Heart right ventricle (tissue), 16 donors: ENCODE measurements at regions of chr2 and their contacts with region 1.

Region 1: DNA sequence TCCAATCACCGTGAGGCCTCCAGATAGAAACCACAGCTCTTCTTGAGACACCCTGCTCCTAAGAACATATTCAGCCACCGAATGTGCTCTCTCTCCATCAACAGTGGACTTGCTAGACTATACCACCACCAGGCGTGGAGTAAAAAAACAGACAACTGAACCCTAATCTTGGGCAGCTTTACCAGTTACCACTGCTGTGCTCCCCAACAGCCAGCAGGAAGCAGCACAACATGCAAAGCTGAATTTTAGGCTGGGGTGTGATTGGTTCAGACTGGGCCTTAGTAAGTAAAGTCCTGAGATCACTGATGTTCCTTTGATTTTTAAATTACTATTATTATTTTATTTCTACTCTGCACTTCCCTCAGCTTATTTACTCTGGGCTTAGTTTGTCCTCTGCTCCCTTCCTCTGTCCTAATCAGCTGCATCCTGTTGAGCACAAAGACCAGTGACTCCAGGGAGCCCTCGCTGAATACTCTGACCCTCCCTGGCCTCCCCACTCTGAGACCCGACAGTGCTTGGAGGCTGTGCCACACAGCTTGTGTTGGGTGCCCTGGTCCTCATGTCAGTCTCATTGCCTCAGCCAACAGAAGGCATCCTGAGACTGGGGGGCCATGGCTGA is 21.9 kb downstream of the MRPL35 start:
- DNase-seq: peak in 1 of 2 donors; percentile 61
- ATAC-seq: peak in 1 of 8 donors; percentile 15
- H3K4me3 ChIP-seq: no peak overlapping the region
- H3K27ac ChIP-seq: peak overlapping the region in 5 of 10 donors; percentile 46 to 94 (median 90)
- H3K4me1 ChIP-seq: peaks cover 17 to 68% (median 50%) of the 10 kb centered on the region in 9 donors
- H3K27me3 ChIP-seq: no peaks in the 10 kb centered on the region
- CTCF ChIP-seq: peak; percentile 66 to 97 (median 90)

Region 2: GRCh38 chr2:86160156-86160952 is 60.8 kb before region 1 on chr2:
- intact Hi-C with region 1: no loop called
- DNase-seq: no peak
- ATAC-seq: no peak
- H3K4me3 ChIP-seq: no peak overlapping the region
- H3K27ac ChIP-seq: no peak overlapping the region
- H3K4me1 ChIP-seq: no peaks in the 10 kb centered on the region
- H3K27me3 ChIP-seq: no peaks in the 10 kb centered on the region
- CTCF ChIP-seq: no peak

Region 3: GRCh38 chr2:86274918-86275275 is 53.7 kb after region 1 on chr2:
- intact Hi-C with region 1: loop called in 3 of 10 experiments (anchors 10 kb)
- DNase-seq: peak; percentile 51 to 72
- ATAC-seq: peak; percentile 63 to 87 (median 80)
- H3K4me3 ChIP-seq: no peak overlapping the region
- H3K27ac ChIP-seq: peak overlapping the region in 1 of 10 donors; percentile 9
- H3K4me1 ChIP-seq: peaks cover 2 to 29% (median 19%) of the 10 kb centered on the region in 9 donors
- H3K27me3 ChIP-seq: no peaks in the 10 kb centered on the region
- CTCF ChIP-seq: no peak

Region 4: GRCh38 chr2:86280191-86280667 is 59.1 kb after region 1 on chr2:
- intact Hi-C with region 1: loop called in 3 of 10 experiments (anchors 10 kb)
- DNase-seq: peak in 1 of 2 donors; percentile 31
- ATAC-seq: peak; percentile 26 to 64 (median 42)
- H3K4me3 ChIP-seq: peak overlapping the region in 1 of 10 donors; percentile 2
- H3K27ac ChIP-seq: peak overlapping the region in 6 of 10 donors; percentile 9 to 55 (median 46)
- H3K4me1 ChIP-seq: peaks cover 6 to 62% (median 36%) of the 10 kb centered on the region in 9 donors
- H3K27me3 ChIP-seq: no peaks in the 10 kb centered on the region
- CTCF ChIP-seq: no peak

Region 5: GRCh38 chr2:86298411-86299379 is 77.5 kb after region 1 on chr2:
- intact Hi-C with region 1: loop called in 5 of 10 experiments (anchors 2 to 5 kb)
- DNase-seq: peak in 1 of 2 donors; percentile 28
- ATAC-seq: peak; percentile 54 to 82 (median 71)
- H3K4me3 ChIP-seq: no peak overlapping the region
- H3K27ac ChIP-seq: peak overlapping the region in 8 of 10 donors; percentile 16 to 52 (median 34)
- H3K4me1 ChIP-seq: peaks cover 9 to 62% (median 44%) of the 10 kb centered on the region in 9 donors
- H3K27me3 ChIP-seq: no peaks in the 10 kb centered on the region
- CTCF ChIP-seq: peak; percentile 23 to 71 (median 52)